Endothelial cell of umbilical vein (primary cell): ENCODE measurements at regions of chr14 and their contacts with region 1.

Region 1: DNA sequence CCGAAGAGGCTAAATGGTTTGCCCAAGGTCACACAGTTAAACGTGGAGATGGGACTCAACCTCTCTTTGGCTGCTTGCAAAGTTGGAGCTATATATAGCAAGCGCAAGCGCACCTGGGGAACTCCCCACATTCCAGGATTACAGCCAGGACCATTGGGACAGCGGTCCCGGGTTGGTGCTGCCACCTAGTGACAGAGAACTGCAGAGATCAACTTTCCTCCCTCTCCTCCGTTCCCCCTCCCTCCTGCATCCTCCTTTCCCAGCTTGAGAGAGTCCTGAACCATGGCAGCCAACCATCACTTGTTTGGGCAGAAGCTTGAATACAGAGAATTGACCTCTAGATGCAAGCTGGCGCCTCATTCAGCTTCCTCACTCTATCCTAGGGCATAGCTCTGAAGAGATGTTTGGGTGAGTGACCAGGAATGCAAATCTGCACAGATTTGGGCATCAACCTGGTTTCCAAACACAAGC is 17.4 kb upstream of the FLVCR2 start:
- DNase-seq: peak; percentile 76
- H3K4me3 ChIP-seq: no peak overlapping the region
- H3K27ac ChIP-seq: no peak overlapping the region
- H3K4me1 ChIP-seq: no peaks in the 10 kb centered on the region
- H3K27me3 ChIP-seq: peaks cover 0 to 4% of the 10 kb centered on the region in 2 experiments
- CTCF ChIP-seq: peak; percentile 88 to 90
- POLR2A ChIP-seq: no peak

Region 2: DNA sequence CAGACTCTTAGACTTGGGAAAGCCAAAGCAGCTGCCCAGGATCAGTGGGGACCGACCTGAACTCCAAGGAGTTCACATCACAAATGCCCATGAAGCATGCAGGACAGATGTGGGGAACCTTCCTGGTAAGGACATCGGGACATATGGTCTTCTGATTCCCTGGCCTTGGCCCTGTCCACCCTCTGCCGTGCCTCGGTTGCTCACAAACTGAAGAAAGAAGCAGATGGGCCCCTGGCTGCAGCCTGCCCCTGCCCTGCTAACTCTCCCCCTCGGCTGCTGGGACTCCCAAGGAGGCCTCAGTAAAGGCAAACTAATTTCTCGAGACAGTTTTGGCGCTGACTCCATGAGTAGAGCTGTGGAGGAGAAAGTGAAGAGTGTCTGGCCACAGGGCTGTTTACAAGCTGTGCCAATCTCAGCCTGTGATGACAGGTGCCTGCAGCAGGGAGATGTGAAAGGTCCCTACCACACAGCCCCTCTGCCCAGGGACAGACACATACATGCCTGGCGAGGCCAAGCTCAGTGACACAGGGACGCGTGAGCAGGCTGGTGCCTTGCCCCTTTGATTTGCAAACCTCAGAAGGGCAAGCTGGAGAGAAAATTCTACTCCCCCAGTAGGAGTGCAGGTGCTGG is 1018.8 kb before region 1 on chr14:
- CTCF ChIA-PET with region 1: no interaction called
- POLR2A ChIA-PET with region 1: no interaction called
- dilution Hi-C with region 1: no loop called
- intact Hi-C with region 1: no loop called
- DNase-seq: no peak
- H3K4me3 ChIP-seq: no peak overlapping the region
- H3K27ac ChIP-seq: no peak overlapping the region
- H3K4me1 ChIP-seq: no peaks in the 10 kb centered on the region
- H3K27me3 ChIP-seq: no peaks in the 10 kb centered on the region
- CTCF ChIP-seq: no peak
- POLR2A ChIP-seq: no peak

Region 3: DNA sequence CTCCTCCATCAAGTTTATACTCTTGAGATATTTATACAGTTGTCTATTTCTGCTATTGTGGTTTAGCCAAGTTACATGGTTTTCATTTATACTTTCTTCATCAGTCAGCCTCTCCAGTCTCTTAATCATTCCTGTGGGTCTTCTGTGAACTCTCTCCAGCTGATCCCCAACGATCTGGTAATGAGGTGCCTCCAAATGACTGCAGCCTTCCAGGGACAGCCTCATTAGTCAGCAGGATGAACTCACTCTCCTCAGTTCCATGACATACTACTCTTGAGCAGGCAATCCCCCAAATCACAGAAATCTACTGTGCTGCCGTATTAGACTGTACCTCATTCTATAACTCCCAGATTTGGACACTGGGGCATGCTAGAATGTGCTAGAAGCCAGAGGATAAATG is 863.5 kb before region 1 on chr14:
- CTCF ChIA-PET with region 1: no interaction called
- POLR2A ChIA-PET with region 1: no interaction called
- dilution Hi-C with region 1: no loop called
- intact Hi-C with region 1: no loop called
- DNase-seq: no peak
- H3K4me3 ChIP-seq: no peak overlapping the region
- H3K27ac ChIP-seq: no peak overlapping the region
- H3K4me1 ChIP-seq: no peaks in the 10 kb centered on the region
- H3K27me3 ChIP-seq: no peaks in the 10 kb centered on the region
- CTCF ChIP-seq: no peak
- POLR2A ChIP-seq: no peak

Region 4: DNA sequence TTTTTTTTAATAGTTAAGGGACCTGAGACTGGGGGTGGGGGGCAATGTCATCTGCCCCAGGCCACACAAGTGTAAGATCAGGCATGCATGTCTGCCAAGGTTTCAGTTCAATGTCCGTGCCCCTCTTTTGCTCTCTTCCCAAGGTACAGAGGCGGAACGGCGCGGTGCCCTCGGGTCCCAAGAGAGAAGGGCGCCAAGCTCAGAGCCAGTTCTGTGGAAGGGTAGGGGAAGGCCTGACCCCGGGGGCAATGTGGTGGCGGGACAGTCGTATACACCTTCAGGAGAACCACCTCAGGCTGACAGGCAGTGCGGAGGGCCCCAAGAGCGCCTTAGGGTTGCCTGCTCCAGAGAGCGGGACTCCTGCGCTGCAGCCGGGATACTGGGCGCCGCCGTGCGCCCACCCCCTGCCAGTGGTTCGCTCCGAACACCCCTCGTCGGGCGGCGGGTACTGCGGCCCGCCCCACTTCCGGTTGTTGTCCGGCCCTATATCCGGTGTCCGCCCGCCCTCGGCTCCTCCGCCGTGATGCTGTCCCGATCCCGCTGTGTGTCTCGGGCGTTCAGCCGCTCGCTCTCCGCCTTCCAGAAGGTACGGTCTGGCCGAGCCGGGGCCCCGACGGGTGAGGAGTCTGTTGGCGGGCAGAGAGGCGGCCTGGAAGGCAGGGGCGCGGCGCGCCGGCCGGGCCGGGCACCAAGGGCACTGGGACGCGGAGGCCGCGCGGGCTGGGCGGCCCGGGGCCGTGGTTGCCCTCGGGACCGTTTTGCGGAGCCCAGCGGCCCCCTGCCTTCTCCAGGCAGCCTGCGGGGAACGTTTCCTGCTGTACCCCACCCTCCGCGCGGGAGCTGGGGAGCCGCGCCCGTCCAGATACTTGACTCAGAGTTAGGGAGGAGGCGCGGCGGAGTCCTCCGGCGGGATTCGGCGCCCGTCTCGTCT is 679.3 kb before region 1 on chr14 and contains the start of gene DLST:
- CTCF ChIA-PET with region 1: no interaction called
- POLR2A ChIA-PET with region 1: no interaction called
- dilution Hi-C with region 1: no loop called
- intact Hi-C with region 1: no loop called
- DNase-seq: peak; percentile 87
- H3K4me3 ChIP-seq: peak within 1 kb of the TSS; percentile 49 to 95 (median 93)
- H3K27ac ChIP-seq: peak within 1 kb of the TSS; percentile 74
- H3K4me1 ChIP-seq: peaks cover 24% of the 10 kb centered on the region
- H3K27me3 ChIP-seq: no peaks in the 10 kb centered on the region
- CTCF ChIP-seq: no peak
- POLR2A ChIP-seq: peak; percentile 96
- total RNA-seq, gene DLST: 105 and 110 TPM in 2 replicates

Region 5: GRCh38 chr14:75307700-75308379 is 253.2 kb before region 1 on chr14:
- CTCF ChIA-PET with region 1: interaction called, 83 read pairs
- POLR2A ChIA-PET with region 1: interaction called, 3 read pairs
- dilution Hi-C with region 1: no loop called
- intact Hi-C with region 1: loop called (anchors 1 kb)
- DNase-seq: peak; percentile 77
- H3K4me3 ChIP-seq: no peak overlapping the region
- H3K27ac ChIP-seq: no peak overlapping the region
- H3K4me1 ChIP-seq: peaks cover 3% of the 10 kb centered on the region
- H3K27me3 ChIP-seq: peaks cover 0 to 2% of the 10 kb centered on the region in 2 experiments
- CTCF ChIP-seq: peak; percentile 91 to 93
- POLR2A ChIP-seq: no peak

Region 6: GRCh38 chr14:75487155-75487671 is 73.8 kb before region 1 on chr14:
- CTCF ChIA-PET with region 1: interaction called, 87 read pairs
- POLR2A ChIA-PET with region 1: no interaction called
- dilution Hi-C with region 1: no loop called
- intact Hi-C with region 1: loop called (anchors 1 kb)
- DNase-seq: no peak
- H3K4me3 ChIP-seq: no peak overlapping the region
- H3K27ac ChIP-seq: no peak overlapping the region
- H3K4me1 ChIP-seq: no peaks in the 10 kb centered on the region
- H3K27me3 ChIP-seq: peaks cover 9 to 10% of the 10 kb centered on the region in 2 experiments
- CTCF ChIP-seq: no peak
- POLR2A ChIP-seq: no peak

Region 7: DNA sequence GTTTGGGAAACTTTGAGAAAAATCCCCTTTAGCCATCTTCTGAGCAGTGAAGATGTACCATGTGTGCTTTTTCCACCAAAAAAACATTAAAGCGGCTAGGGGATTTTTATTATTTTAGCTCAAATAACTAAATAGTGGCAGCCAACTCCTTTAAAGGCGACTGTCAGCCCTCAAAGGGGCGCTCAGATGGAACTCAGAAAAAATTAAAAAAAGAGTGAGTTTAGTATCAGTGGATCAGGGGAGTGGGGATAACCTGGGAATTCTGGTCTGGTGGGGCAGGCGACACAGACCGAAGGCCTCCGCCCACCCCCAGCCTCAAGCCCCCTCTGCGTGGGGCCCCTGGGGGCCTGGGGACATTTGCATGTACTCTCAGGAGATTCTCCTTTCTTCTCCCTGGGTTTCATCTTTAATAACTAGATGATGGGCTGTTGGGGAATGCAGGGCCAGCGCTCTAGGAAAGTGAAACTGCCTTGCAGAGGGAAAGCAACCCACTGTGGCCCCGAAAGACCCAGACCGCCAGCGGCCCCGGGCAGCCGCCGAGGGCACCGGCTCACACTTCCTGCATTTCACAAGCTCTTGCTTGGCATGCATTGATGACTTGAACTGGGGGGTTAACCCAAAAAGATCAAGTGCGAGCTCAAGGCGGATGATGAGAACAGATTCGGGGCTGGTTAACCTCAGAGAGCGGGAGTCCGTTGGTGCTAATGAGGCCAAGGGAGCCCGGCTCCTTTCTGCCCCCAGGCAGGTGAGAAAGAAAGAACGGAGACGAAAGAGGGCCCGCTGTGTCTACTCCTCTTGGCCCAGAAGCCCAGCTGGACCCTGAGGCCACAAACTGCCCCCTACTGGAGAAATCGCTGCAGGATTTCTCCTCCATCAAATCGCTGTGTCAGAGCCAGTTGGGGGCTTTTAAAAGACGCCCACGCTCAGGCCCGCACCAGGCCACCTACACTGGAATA is 46.0 kb before region 1 on chr14:
- CTCF ChIA-PET with region 1: interaction called, 89 read pairs
- POLR2A ChIA-PET with region 1: no interaction called
- dilution Hi-C with region 1: no loop called
- intact Hi-C with region 1: loop called (anchors 1 kb)
- DNase-seq: peak; percentile 17
- H3K4me3 ChIP-seq: peak overlapping the region in 2 of 3 experiments; percentile 28 to 29
- H3K27ac ChIP-seq: no peak overlapping the region
- H3K4me1 ChIP-seq: no peaks in the 10 kb centered on the region
- H3K27me3 ChIP-seq: no peaks in the 10 kb centered on the region
- CTCF ChIP-seq: peak in 1 of 2 donors; percentile 19
- POLR2A ChIP-seq: no peak

Region 8: GRCh38 chr14:75527449-75528163 is 33.4 kb before region 1 on chr14:
- CTCF ChIA-PET with region 1: interaction called, 89 read pairs
- POLR2A ChIA-PET with region 1: no interaction called
- dilution Hi-C with region 1: no loop called
- intact Hi-C with region 1: loop called (anchors 1 kb)
- DNase-seq: no peak
- H3K4me3 ChIP-seq: no peak overlapping the region
- H3K27ac ChIP-seq: no peak overlapping the region
- H3K4me1 ChIP-seq: peaks cover 23% of the 10 kb centered on the region
- H3K27me3 ChIP-seq: no peaks in the 10 kb centered on the region
- CTCF ChIP-seq: no peak
- POLR2A ChIP-seq: no peak

Region 9: GRCh38 chr14:75577729-75578101 is 16.7 kb after region 1 on chr14:
- CTCF ChIA-PET with region 1: interaction called, 23 read pairs
- POLR2A ChIA-PET with region 1: no interaction called
- dilution Hi-C with region 1: no loop called
- intact Hi-C with region 1: no loop called
- DNase-seq: peak; percentile 82
- H3K4me3 ChIP-seq: peak overlapping the region; percentile 50 to 83 (median 64)
- H3K27ac ChIP-seq: no peak overlapping the region
- H3K4me1 ChIP-seq: peaks cover 18% of the 10 kb centered on the region
- H3K27me3 ChIP-seq: peaks cover 0 to 4% of the 10 kb centered on the region in 2 experiments
- CTCF ChIP-seq: peak; percentile 70 to 83
- POLR2A ChIP-seq: no peak

Region 10: DNA sequence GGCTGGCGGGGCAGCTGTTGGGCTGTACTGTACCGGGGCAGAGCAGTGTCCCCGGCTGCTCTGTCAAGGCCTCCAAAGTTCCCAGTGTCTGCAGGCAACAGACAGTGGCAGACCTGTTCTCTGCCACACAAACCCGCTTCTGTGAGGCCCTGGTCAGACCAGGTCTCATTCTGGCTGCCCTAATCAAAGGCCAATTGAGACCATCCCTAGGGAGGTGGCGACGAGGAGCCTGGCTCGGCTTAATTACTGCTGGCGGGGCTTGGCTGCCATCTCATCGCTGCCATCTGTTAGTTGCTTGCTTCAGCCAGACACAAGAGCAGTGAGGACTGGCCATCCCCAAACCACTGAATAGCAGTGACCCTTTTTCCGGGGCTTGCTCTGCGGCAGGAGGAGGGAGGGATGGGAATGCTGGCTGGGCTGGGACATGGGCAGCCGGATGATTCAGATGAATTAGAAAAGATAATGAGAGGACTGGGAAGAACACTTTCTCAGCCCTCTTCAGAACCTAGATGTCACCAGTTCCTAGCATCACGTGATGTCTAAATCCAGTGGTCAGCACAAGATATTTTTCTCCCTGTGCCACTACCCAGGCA is 75.2 kb after region 1 on chr14:
- CTCF ChIA-PET with region 1: no interaction called
- POLR2A ChIA-PET with region 1: no interaction called
- dilution Hi-C with region 1: no loop called
- intact Hi-C with region 1: no loop called
- DNase-seq: no peak
- H3K4me3 ChIP-seq: no peak overlapping the region
- H3K27ac ChIP-seq: no peak overlapping the region
- H3K4me1 ChIP-seq: no peaks in the 10 kb centered on the region
- H3K27me3 ChIP-seq: peaks cover 0 to 2% of the 10 kb centered on the region in 2 experiments
- CTCF ChIP-seq: no peak
- POLR2A ChIP-seq: no peak